Right lobe of liver (tissue), 6 donors: ENCODE measurements at regions of chr9 and their contacts with region 1.

Region 1: GRCh38 chr9:36328798-36329411 is 70.7 kb upstream of the GNE start:
- DNase-seq: no peak
- ATAC-seq: peak; percentile 80 to 85 (median 81)
- H3K4me3 ChIP-seq: no peak overlapping the region
- H3K27ac ChIP-seq: no peak overlapping the region
- H3K4me1 ChIP-seq: peaks cover 0 to 7% (median 0%) of the 10 kb centered on the region in 4 donors
- H3K27me3 ChIP-seq: no peaks in the 10 kb centered on the region
- CTCF ChIP-seq: peak; percentile 78 to 89 (median 80)
- POLR2A ChIP-seq: no peak

Region 2: GRCh38 chr9:36204906-36205547 is 123.9 kb before region 1 on chr9:
- intact Hi-C with region 1: loop called in 1 of 2 experiments (anchors 10 kb)
- DNase-seq: peak in 2 of 3 donors; percentile 31 to 47
- ATAC-seq: peak; percentile 77 to 88 (median 82)
- H3K4me3 ChIP-seq: no peak overlapping the region
- H3K27ac ChIP-seq: no peak overlapping the region
- H3K4me1 ChIP-seq: peaks cover 0 to 14% (median 7%) of the 10 kb centered on the region in 4 donors
- H3K27me3 ChIP-seq: no peaks in the 10 kb centered on the region
- CTCF ChIP-seq: peak in 3 of 4 donors; percentile 23 to 43 (median 36)
- POLR2A ChIP-seq: no peak

Region 3: DNA sequence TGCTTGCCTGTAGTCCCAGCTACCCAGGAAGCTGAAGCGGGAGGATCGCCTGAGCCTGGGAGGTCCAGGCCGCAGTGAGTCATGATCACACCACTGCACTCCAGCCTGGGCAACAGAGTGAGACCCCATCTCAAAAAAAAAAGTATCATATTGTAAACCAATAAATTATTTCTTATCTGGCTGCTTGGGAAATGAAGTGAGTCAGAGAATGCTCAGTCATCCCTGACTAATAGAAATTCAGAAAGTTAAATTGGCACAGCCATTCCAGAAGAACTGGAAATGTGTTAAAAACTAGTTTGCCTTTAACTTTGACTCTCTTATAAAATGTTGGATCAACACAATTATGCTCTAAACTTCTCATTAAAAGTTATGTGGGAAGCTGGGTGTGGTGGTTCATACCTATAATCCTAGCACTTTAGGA is 60.9 kb before region 1 on chr9:
- intact Hi-C with region 1: loop called in 1 of 2 experiments (anchors 10 kb)
- DNase-seq: no peak
- ATAC-seq: no peak
- H3K4me3 ChIP-seq: no peak overlapping the region
- H3K27ac ChIP-seq: no peak overlapping the region
- H3K4me1 ChIP-seq: peaks cover 0 to under 1% (median under 1%) of the 10 kb centered on the region in 4 donors
- H3K27me3 ChIP-seq: no peaks in the 10 kb centered on the region
- CTCF ChIP-seq: no peak
- POLR2A ChIP-seq: no peak